Naive thymus-derived CD4-positive, alpha-beta T cell (primary cell): ENCODE measurements at regions of chr1 and their contacts with region 1.

Region 1: DNA sequence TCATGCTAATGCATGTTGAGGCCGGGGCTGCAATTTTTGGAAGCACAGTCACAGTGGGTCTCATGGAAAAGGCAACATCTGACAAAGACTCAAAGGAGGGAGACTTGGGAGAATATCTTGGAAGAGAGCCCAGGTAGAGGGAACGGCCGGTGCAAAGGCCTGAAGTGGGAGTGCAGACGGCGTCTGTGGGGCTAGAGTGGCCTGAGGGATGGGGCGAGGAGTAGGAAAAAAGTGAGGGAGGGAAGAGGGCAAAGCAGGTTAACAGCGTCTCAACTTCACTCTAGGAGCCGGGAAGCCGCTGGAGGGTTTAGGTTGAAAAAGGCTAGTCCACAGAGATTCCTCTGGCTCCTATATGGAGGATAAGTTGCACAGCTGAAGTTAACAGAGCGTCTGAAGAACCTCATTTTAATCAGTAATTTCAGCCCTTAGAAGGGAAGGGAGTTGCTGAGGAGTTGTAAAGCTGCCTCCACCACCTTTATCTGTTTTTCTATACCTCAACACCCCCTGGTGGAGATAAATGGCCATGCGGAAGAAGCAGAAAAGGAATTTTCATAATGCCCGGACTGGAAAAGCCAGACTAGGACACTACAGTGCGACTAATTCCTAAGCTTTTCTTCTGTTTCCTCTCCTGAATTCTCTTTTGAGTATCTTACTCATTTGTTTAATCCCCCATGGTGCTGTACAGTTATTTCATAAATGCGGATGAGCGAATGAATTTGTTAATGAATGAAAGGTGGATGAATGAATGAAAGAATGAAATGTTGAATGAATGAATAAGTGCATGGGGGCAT is 78.7 kb upstream of the ZNF281 start:
- DNase-seq: peak in 8 of 9 donors; percentile 38 to 61 (median 56)
- ATAC-seq: peak; percentile 67
- H3K4me3 ChIP-seq: no peak overlapping the region
- H3K4me3 Mint-ChIP-seq: no peak overlapping the region
- H3K27ac ChIP-seq: no peak overlapping the region
- H3K27ac Mint-ChIP-seq: peak overlapping the region in 1 of 9 donors; percentile 79
- H3K4me1 ChIP-seq: no peaks in the 10 kb centered on the region
- H3K4me1 Mint-ChIP-seq: peaks cover 0 to 14% (median 0%) of the 10 kb centered on the region in 7 donors
- H3K27me3 ChIP-seq: no peaks in the 10 kb centered on the region
- H3K27me3 Mint-ChIP-seq: peaks cover 0 to 29% (median 11%) of the 10 kb centered on the region in 5 donors

Region 2: DNA sequence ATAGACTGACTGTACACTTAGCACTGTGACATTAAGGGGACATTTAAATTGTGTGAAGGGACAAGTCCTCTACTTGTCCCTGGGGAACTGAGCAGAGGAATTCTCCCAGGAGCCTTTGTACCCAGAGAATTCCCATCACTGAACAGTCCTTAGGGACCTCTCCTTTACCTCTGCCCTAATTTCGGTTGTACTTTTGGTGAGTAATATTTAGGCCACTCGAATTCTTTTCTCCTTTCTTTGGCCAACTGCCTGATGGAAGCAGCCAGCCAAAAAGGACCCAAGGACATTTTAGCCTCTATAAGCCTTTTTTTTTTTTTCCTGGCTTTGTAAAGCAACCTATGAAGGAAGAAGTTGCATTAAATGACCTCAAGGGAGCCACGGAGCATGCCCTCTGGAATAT is 389.5 kb before region 1 on chr1:
- CTCF ChIA-PET with region 1: no interaction called
- POLR2A ChIA-PET with region 1: no interaction called
- intact Hi-C with region 1: loop called in 1 of 2 experiments (anchors 5 kb)
- DNase-seq: no peak
- ATAC-seq: no peak
- H3K4me3 ChIP-seq: no peak overlapping the region
- H3K4me3 Mint-ChIP-seq: no peak overlapping the region
- H3K27ac ChIP-seq: no peak overlapping the region
- H3K27ac Mint-ChIP-seq: no peak overlapping the region
- H3K4me1 ChIP-seq: no peaks in the 10 kb centered on the region
- H3K4me1 Mint-ChIP-seq: peaks cover 0 to 4% (median 0%) of the 10 kb centered on the region in 7 donors
- H3K27me3 ChIP-seq: no peaks in the 10 kb centered on the region
- H3K27me3 Mint-ChIP-seq: peaks cover 0 to 18% (median 0%) of the 10 kb centered on the region in 5 donors

Region 3: DNA sequence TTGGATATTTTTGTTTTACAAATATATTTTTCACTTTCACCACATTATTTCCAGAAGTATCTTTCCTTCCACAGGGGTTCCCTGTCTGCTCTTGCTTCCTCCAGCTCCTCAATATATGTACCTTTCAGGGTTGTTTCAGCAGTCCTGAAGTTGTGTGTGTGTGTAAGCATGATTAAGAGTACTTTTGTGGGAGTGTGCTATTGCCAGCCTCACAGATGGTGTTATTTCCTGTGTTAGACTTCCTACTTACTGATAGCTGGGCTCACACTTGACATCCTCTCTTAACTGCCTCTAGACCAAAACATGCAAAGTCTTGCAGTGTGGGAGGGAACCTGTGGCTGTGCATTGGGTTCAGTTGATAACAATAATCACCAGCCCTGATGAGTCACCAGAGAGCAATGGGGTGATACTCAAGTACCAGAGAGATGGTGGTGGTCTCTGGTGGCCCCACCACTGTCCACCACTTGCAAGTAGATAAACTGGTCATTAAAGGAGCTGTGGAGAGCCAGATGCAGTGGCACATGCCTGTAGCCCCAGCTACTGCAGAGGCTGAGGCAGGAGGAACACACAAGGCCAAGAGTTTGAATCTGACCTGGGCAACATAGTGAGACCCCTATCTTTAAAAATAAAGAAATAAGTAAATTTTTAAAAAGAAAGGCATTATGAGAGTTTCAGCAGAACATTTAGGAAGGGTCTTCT is 334.4 kb before region 1 on chr1:
- CTCF ChIA-PET with region 1: no interaction called
- POLR2A ChIA-PET with region 1: no interaction called
- intact Hi-C with region 1: loop called in 1 of 2 experiments (anchors 5 kb)
- DNase-seq: peak in 8 of 9 donors; percentile 26 to 65 (median 50)
- ATAC-seq: peak; percentile 88
- H3K4me3 ChIP-seq: no peak overlapping the region
- H3K4me3 Mint-ChIP-seq: peak overlapping the region; percentile 45 to 87 (median 67)
- H3K27ac ChIP-seq: peak overlapping the region; percentile 64
- H3K27ac Mint-ChIP-seq: peak overlapping the region; percentile 74 to 99 (median 89)
- H3K4me1 ChIP-seq: peaks cover 27 to 30% of the 10 kb centered on the region in 2 donors
- H3K4me1 Mint-ChIP-seq: peaks cover 18 to 54% (median 29%) of the 10 kb centered on the region in 7 donors
- H3K27me3 ChIP-seq: no peaks in the 10 kb centered on the region
- H3K27me3 Mint-ChIP-seq: peaks cover 0 to 2% (median 0%) of the 10 kb centered on the region in 5 donors

Region 4: GRCh38 chr1:200279810-200280411 is 208.7 kb before region 1 on chr1:
- CTCF ChIA-PET with region 1: interaction called, 8 read pairs
- POLR2A ChIA-PET with region 1: no interaction called
- intact Hi-C with region 1: loop called (anchors 1 kb)
- DNase-seq: peak in 6 of 9 donors; percentile 7 to 31 (median 16)
- ATAC-seq: peak; percentile 40
- H3K4me3 ChIP-seq: no peak overlapping the region
- H3K4me3 Mint-ChIP-seq: no peak overlapping the region
- H3K27ac ChIP-seq: no peak overlapping the region
- H3K27ac Mint-ChIP-seq: no peak overlapping the region
- H3K4me1 ChIP-seq: no peaks in the 10 kb centered on the region
- H3K4me1 Mint-ChIP-seq: peaks cover 0 to 4% (median 0%) of the 10 kb centered on the region in 7 donors
- H3K27me3 ChIP-seq: no peaks in the 10 kb centered on the region
- H3K27me3 Mint-ChIP-seq: peaks cover 0 to 14% (median 0%) of the 10 kb centered on the region in 5 donors

Region 5: GRCh38 chr1:200351826-200352549 is 136.6 kb before region 1 on chr1:
- CTCF ChIA-PET with region 1: no interaction called
- POLR2A ChIA-PET with region 1: no interaction called
- intact Hi-C with region 1: loop called in 1 of 2 experiments (anchors 5 kb)
- DNase-seq: peak in 7 of 9 donors; percentile 14 to 49 (median 39)
- ATAC-seq: peak; percentile 77
- H3K4me3 ChIP-seq: peak overlapping the region; percentile 41
- H3K4me3 Mint-ChIP-seq: peak overlapping the region; percentile 65 to 88 (median 82)
- H3K27ac ChIP-seq: peak overlapping the region; percentile 43
- H3K27ac Mint-ChIP-seq: peak overlapping the region; percentile 80 to 95 (median 91)
- H3K4me1 ChIP-seq: peaks cover 8 to 16% of the 10 kb centered on the region in 2 donors
- H3K4me1 Mint-ChIP-seq: peaks cover 21 to 45% (median 31%) of the 10 kb centered on the region in 7 donors
- H3K27me3 ChIP-seq: no peaks in the 10 kb centered on the region
- H3K27me3 Mint-ChIP-seq: no peaks in the 10 kb centered on the region

Region 6: GRCh38 chr1:200442537-200443169 is 45.9 kb before region 1 on chr1:
- CTCF ChIA-PET with region 1: no interaction called
- POLR2A ChIA-PET with region 1: no interaction called
- intact Hi-C with region 1: no loop called
- DNase-seq: no peak
- ATAC-seq: no peak
- H3K4me3 ChIP-seq: no peak overlapping the region
- H3K4me3 Mint-ChIP-seq: no peak overlapping the region
- H3K27ac ChIP-seq: no peak overlapping the region
- H3K27ac Mint-ChIP-seq: no peak overlapping the region
- H3K4me1 ChIP-seq: no peaks in the 10 kb centered on the region
- H3K4me1 Mint-ChIP-seq: peaks cover 0 to 10% (median 5%) of the 10 kb centered on the region in 7 donors
- H3K27me3 ChIP-seq: no peaks in the 10 kb centered on the region
- H3K27me3 Mint-ChIP-seq: no peaks in the 10 kb centered on the region

Region 7: GRCh38 chr1:200473698-200474371 is 14.7 kb before region 1 on chr1:
- CTCF ChIA-PET with region 1: no interaction called
- POLR2A ChIA-PET with region 1: no interaction called
- intact Hi-C with region 1: loop called in 1 of 2 experiments (anchors 1 kb)
- DNase-seq: no peak
- ATAC-seq: peak; percentile 26
- H3K4me3 ChIP-seq: no peak overlapping the region
- H3K4me3 Mint-ChIP-seq: peak overlapping the region in 1 of 10 donors; percentile 65
- H3K27ac ChIP-seq: no peak overlapping the region
- H3K27ac Mint-ChIP-seq: peak overlapping the region in 1 of 9 donors; percentile 71
- H3K4me1 ChIP-seq: peaks cover 0 to 8% of the 10 kb centered on the region in 2 donors
- H3K4me1 Mint-ChIP-seq: peaks cover 0 to 20% (median 0%) of the 10 kb centered on the region in 7 donors
- H3K27me3 ChIP-seq: no peaks in the 10 kb centered on the region
- H3K27me3 Mint-ChIP-seq: peaks cover 0 to 26% (median 7%) of the 10 kb centered on the region in 5 donors

Region 8: GRCh38 chr1:200639790-200640669 is 151.5 kb after region 1 on chr1:
- CTCF ChIA-PET with region 1: no interaction called
- POLR2A ChIA-PET with region 1: no interaction called
- intact Hi-C with region 1: no loop called
- DNase-seq: no peak
- ATAC-seq: peak; percentile 97
- H3K4me3 ChIP-seq: no peak overlapping the region
- H3K4me3 Mint-ChIP-seq: no peak overlapping the region
- H3K27ac ChIP-seq: no peak overlapping the region
- H3K27ac Mint-ChIP-seq: peak overlapping the region in 3 of 9 donors; percentile 18 to 49 (median 33)
- H3K4me1 ChIP-seq: no peaks in the 10 kb centered on the region
- H3K4me1 Mint-ChIP-seq: peaks cover 0 to 10% (median 0%) of the 10 kb centered on the region in 7 donors
- H3K27me3 ChIP-seq: no peaks in the 10 kb centered on the region
- H3K27me3 Mint-ChIP-seq: no peaks in the 10 kb centered on the region